Pancreas (tissue), 10 donors: ENCODE measurements at regions of chr10 and their contacts with region 1.

Region 1: DNA sequence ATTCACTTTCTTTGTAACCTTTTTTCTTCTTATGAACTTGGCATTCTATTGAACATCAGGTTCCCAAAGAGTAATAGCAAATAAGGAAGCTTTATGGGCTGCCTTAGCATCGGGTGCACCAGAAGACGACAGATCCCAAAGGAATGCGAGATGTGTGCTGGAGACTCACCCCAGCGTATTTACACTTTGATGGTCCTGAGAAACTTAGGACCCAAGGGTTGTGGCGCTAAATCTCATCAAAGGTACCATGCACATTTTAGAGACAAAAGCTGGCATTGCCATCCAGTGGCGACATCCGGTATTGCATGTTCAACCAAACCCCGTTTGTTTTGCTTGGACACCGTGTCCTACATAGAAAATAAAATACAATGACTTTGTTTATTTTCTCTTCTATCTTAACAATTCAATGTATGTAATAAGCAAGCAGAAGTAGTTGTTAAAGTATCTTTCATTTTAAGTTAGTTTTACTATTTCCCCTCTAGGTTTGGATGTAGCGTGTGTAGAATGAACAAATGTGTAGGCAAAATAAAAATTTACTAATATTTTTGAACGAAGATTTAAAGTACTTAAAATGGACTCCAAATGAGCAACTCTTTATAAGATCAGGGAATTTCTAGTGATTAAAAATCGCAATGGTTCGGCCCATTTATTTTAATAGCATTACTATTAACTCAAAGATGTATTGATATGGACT is 1154.8 kb downstream of the GATA3 start:
- DNase-seq: peak in 5 of 6 donors; percentile 20 to 83 (median 53)
- ATAC-seq: peak in 3 of 4 donors; percentile 74 to 81 (median 75)
- H3K4me3 ChIP-seq: no peak overlapping the region
- H3K27ac ChIP-seq: no peak overlapping the region
- H3K4me1 ChIP-seq: no peaks in the 10 kb centered on the region
- H3K27me3 ChIP-seq: peaks cover 0 to 15% (median 0%) of the 10 kb centered on the region in 4 donors
- CTCF ChIP-seq: peak; percentile 80 to 92 (median 84)

Region 2: DNA sequence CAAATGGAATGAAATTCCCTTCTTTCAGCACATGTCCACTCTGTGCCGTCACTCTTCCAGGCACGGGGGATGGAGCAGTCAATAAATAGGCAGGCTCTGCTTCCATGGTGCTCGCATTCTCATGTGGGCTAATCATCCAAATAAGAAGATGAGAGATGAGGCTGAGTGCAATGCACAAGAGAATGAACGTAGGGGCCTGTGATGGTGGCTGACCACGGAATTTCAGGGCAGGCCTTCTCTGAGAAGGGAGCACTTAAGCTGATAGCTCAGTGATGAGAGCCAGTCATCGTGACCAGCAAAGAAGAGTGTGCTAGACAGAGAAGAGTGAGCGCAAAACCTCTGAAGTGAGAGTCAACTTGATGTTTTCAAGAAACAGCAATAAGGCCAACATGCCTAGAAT is 1343.1 kb before region 1 on chr10:
- intact Hi-C with region 1: loop called in 2 of 3 experiments (anchors 10 kb)
- DNase-seq: no peak
- ATAC-seq: no peak
- H3K4me3 ChIP-seq: no peak overlapping the region
- H3K27ac ChIP-seq: no peak overlapping the region
- H3K4me1 ChIP-seq: no peaks in the 10 kb centered on the region
- H3K27me3 ChIP-seq: no peaks in the 10 kb centered on the region
- CTCF ChIP-seq: no peak

Region 3: GRCh38 chr10:7872041-7872442 is 1337.2 kb before region 1 on chr10:
- intact Hi-C with region 1: loop called in 2 of 3 experiments (anchors 10 kb)
- DNase-seq: no peak
- ATAC-seq: peak; percentile 46 to 88 (median 72)
- H3K4me3 ChIP-seq: peak overlapping the region in 2 of 4 donors; percentile 15 to 30
- H3K27ac ChIP-seq: no peak overlapping the region
- H3K4me1 ChIP-seq: peaks cover 0 to 23% (median 13%) of the 10 kb centered on the region in 3 donors
- H3K27me3 ChIP-seq: no peaks in the 10 kb centered on the region
- CTCF ChIP-seq: peak in 3 of 4 donors; percentile 38 to 74 (median 54)

Region 4: DNA sequence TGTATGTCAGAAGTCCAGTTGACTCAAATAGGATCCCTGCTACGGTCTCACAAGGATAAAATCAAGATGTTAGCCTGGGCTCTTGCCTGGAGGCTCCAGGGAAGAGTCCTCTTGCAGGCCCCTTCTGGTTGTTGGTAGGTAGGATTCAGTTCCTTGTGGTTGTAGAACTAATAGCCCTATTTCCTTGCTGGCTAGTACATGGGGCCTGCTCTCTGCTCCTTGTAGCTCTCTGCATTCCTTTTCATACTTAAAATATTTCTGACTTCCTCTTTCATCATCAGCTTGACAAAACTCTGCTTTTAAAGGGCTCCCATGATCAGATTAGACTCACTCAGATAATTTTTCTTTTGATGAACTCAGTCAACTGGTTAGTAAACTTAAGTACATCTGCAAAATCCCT is 398.1 kb before region 1 on chr10:
- intact Hi-C with region 1: no loop called
- DNase-seq: no peak
- ATAC-seq: no peak
- H3K4me3 ChIP-seq: no peak overlapping the region
- H3K27ac ChIP-seq: no peak overlapping the region
- H3K4me1 ChIP-seq: no peaks in the 10 kb centered on the region
- H3K27me3 ChIP-seq: no peaks in the 10 kb centered on the region
- CTCF ChIP-seq: no peak

Region 5: DNA sequence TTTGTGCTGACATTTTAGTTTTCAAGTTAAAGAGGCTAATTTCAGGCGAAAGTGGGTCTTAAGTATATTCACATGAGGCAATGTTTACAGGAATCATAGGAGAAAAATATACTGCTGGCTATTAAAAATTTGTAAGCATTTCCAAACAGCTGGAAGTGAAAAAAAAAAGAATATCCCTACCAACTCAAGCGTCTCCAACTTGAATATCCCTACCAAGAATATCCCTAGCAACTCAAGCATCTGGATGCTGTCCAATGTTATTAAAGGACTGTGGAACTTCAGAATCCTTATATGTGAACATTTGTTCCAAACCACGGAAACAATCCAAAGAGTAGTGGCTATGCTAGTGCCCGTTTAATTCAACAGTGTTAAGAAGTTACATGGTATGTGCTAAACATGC is 148.2 kb after region 1 on chr10:
- intact Hi-C with region 1: no loop called
- DNase-seq: no peak
- ATAC-seq: no peak
- H3K4me3 ChIP-seq: no peak overlapping the region
- H3K27ac ChIP-seq: no peak overlapping the region
- H3K4me1 ChIP-seq: no peaks in the 10 kb centered on the region
- H3K27me3 ChIP-seq: no peaks in the 10 kb centered on the region
- CTCF ChIP-seq: no peak